PC-9 (cell line): ENCODE measurements at regions of chr19 and their contacts with region 1.

Region 1: DNA sequence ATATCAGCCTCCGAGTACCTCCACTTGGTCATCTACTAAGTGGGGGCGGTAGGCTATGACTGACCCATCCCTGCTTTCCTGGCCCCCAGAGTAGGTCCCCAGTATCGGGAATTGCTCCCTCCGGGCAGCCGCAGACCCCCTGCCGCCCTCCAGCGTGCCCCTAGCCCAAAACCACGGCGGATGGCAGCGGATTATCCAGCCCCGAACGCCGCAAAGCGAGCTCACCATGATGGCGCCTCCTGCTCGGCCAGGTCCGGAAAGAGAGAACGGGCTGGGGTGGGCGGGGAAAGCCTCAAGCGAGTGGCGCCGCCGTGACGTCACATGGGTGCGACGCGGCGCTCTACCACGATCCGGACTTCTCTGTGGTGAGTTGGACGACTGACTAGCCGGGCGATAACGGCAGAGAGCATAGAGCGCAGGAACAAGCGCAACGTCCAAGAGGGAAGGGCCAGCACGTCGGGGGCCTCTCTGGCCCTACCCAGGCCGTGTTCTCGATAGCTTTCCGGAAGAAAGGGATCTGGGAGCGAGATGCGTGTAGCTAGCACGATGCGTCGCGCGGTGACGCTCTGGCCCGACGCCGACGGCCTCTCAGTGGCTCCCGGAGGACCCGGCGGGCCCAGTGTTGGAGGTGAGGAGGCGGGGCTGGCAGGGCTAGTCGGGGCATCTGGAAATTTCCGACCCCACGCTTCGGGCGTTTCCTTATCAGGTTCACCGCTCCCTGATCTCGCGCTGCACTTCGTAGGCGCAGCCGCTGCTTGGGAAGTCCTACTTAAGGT is at the starts of genes RPL18 and SPHK2:
- DNase-seq: peak; percentile 97 to 99
- H3K4me3 ChIP-seq: peak within 1 kb of the TSS; percentile 92
- H3K27ac ChIP-seq: peak within 1 kb of the TSS; percentile 91
- H3K4me1 ChIP-seq: peaks cover 42% of the 10 kb centered on the region
- H3K27me3 ChIP-seq: no peaks in the 10 kb centered on the region
- CTCF ChIP-seq: no peak
- total RNA-seq, gene RPL18: 1,618 and 1,710 TPM in 2 replicates
- total RNA-seq, gene SPHK2: 18.4 and 20.0 TPM in 2 replicates

Region 2: GRCh38 chr19:48363810-48364563 is 255.1 kb before region 1 on chr19 and contains the starts of genes SYNGR4 and TMEM143:
- CTCF ChIA-PET with region 1: no interaction called
- POLR2A ChIA-PET with region 1: interaction called, 30 read pairs
- intact Hi-C with region 1: no loop called
- DNase-seq: peak; percentile 99 to 100
- H3K4me3 ChIP-seq: peak within 1 kb of the TSS; percentile 72
- H3K27ac ChIP-seq: peak within 1 kb of the TSS; percentile 63
- H3K4me1 ChIP-seq: peaks cover 7% of the 10 kb centered on the region
- H3K27me3 ChIP-seq: no peaks in the 10 kb centered on the region
- CTCF ChIP-seq: no peak
- total RNA-seq, gene SYNGR4: 1.3 and 2.1 TPM in 2 replicates
- total RNA-seq, gene TMEM143: 24.8 and 31.3 TPM in 2 replicates

Region 3: GRCh38 chr19:48501496-48502350 is 117.4 kb before region 1 on chr19:
- CTCF ChIA-PET with region 1: no interaction called
- POLR2A ChIA-PET with region 1: no interaction called
- intact Hi-C with region 1: no loop called
- DNase-seq: peak; percentile 96 to 99
- H3K4me3 ChIP-seq: peak overlapping the region; percentile 95
- H3K27ac ChIP-seq: peak overlapping the region; percentile 65
- H3K4me1 ChIP-seq: peaks cover 16% of the 10 kb centered on the region; the same call in 1 of the 2 replicates
- H3K27me3 ChIP-seq: no peaks in the 10 kb centered on the region
- CTCF ChIP-seq: no peak

Region 4: DNA sequence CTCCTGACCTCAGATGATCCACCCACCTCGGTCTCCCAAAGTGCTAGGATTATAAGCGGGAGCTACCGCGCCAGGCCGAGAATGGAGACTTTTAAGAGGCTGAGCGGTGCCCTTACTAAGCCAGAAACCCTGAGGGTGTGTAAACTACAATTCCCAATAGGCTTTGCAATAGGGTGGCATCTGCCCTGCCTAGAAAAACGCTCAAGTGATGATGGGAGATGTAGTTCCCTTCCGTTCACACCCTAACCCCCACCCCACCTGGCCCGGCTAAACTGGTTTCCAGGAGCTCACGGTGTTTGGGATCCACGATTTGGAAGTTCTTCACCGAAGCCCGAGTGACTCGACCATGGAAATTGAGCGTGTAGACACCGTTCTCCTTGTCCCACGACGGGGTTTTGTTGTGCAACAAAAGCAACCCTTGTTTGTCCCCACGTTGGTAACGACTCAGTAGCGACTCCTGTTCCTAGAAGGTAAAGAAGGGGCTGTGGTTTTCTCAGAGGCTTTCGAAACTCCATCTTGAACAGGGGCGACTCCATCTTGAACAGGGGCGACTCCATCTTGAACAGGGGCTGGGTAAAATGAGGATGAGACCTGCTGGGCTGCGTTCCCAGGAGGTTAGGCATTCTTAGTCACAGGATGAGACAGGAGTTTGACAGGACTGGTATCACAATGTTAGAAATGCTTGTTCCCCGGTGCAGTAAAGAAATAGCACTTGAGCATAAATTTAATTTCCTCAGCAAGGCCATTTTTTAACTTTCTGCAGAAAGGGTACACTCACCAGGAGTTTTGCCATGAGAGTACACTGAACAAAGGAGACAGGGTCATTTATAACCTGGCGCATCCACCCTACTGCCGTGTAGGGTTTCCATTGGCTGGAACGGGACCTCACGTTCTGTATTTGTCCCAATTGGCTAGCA is 262.9 kb after region 1 on chr19:
- CTCF ChIA-PET with region 1: no interaction called
- POLR2A ChIA-PET with region 1: interaction called, 19 read pairs
- intact Hi-C with region 1: no loop called
- DNase-seq: no peak
- H3K4me3 ChIP-seq: no peak overlapping the region
- H3K27ac ChIP-seq: no peak overlapping the region
- H3K4me1 ChIP-seq: no peaks in the 10 kb centered on the region
- H3K27me3 ChIP-seq: no peaks in the 10 kb centered on the region
- CTCF ChIP-seq: no peak